Prostate gland (tissue), 2 donors: ENCODE measurements at regions of chr3 and their contacts with region 1.

Region 1: DNA sequence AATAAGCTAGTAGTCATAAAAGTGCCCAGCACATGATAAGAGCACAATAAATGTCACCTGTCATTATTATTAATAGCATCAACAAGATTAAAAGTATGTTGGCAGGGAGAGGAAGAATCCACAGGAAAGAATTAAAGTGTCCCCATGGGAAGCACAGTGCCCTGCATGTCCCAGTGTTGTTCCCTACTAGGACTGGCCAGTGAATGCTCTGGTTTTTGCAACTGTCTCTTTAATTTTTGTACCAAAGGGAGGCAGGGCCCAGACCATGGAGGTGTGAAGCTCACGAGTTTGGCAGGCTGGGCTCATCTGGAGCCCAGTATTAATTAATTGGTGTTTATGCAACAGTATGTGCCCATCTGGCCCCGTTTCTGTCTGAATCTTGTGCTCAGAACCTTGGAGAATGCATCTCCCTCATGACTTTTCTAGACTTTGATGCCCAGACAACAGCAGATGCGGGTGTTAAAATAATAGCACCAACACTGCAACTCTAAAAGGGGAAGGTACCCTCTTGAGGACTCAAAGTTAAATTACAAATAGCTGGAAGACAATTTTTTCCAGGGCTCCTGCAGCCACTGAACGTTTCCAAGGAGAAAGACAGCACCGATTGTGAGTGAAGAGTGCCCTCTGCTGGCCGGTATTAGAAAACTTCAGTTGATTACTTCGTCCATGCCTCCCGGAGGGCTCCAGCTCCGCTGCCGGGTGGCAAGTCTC is 71.9 kb upstream of the SPATA12 start:
- DNase-seq: peak; percentile 83
- H3K4me3 ChIP-seq: no peak overlapping the region
- H3K27ac ChIP-seq: peak overlapping the region in 1 of 2 donors; percentile 41
- H3K4me1 ChIP-seq: peaks cover 8% of the 10 kb centered on the region
- H3K27me3 ChIP-seq: no peaks in the 10 kb centered on the region
- CTCF ChIP-seq: peak; percentile 62 to 91 (median 86)
- POLR2A ChIP-seq: no peak

Region 2: GRCh38 chr3:56086355-56086754 is 902.3 kb before region 1 on chr3:
- intact Hi-C with region 1: no loop called
- DNase-seq: no peak
- H3K4me3 ChIP-seq: no peak overlapping the region
- H3K27ac ChIP-seq: no peak overlapping the region
- H3K4me1 ChIP-seq: no peaks in the 10 kb centered on the region
- H3K27me3 ChIP-seq: no peaks in the 10 kb centered on the region
- CTCF ChIP-seq: no peak
- POLR2A ChIP-seq: no peak

Region 3: DNA sequence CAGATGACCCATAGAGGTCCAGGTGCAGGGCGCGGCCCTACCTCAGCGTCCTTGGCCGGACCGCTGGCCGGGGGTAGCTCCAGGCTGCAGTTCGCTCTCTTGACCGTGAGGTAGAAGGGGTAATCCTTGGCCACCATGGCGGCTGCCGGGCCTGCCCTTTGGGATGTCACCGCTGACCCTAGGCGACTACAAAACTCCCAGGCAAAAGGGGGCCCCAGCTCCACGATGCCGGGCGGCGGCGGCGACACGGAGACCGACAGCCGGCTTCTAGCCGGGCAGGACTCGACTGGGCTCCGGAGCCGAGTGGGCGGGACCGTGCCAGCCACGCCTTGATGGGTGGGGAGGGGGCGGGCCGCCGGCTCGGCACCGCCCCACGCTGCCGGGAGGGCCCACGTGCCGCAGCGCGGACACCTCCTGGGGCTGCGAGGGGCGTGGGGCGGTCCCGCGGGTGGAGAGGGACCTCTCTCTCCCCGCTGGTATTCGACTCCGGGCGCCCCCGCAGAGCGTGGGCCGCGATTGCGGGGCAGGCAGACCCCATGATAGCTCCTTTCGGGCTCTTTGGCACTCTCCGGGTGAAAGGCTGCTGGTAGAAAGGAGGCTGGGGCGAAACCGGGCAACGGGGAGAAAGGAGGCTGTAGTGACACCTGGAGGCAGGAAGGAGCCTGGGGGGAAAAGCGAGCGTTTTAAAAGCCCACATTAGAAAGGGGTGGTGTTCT is 186.8 kb before region 1 on chr3 and contains the start of gene ARHGEF3:
- intact Hi-C with region 1: loop called (anchors 2 kb)
- DNase-seq: peak; percentile 82
- H3K4me3 ChIP-seq: peak within 1 kb of the TSS; percentile 59 to 69
- H3K27ac ChIP-seq: peak within 1 kb of the TSS; percentile 47 to 55
- H3K4me1 ChIP-seq: no peaks in the 10 kb centered on the region
- H3K27me3 ChIP-seq: no peaks in the 10 kb centered on the region
- CTCF ChIP-seq: peak in 2 of 4 experiments; percentile 30 to 33
- POLR2A ChIP-seq: peak; percentile 89
- total RNA-seq, gene ARHGEF3: 21.6 to 59.4 TPM

Region 4: GRCh38 chr3:56930706-56931105 is 57.9 kb before region 1 on chr3:
- intact Hi-C with region 1: loop called (anchors 5 kb)
- DNase-seq: no peak
- H3K4me3 ChIP-seq: no peak overlapping the region
- H3K27ac ChIP-seq: no peak overlapping the region
- H3K4me1 ChIP-seq: no peaks in the 10 kb centered on the region
- H3K27me3 ChIP-seq: no peaks in the 10 kb centered on the region
- CTCF ChIP-seq: no peak
- POLR2A ChIP-seq: no peak

Region 5: DNA sequence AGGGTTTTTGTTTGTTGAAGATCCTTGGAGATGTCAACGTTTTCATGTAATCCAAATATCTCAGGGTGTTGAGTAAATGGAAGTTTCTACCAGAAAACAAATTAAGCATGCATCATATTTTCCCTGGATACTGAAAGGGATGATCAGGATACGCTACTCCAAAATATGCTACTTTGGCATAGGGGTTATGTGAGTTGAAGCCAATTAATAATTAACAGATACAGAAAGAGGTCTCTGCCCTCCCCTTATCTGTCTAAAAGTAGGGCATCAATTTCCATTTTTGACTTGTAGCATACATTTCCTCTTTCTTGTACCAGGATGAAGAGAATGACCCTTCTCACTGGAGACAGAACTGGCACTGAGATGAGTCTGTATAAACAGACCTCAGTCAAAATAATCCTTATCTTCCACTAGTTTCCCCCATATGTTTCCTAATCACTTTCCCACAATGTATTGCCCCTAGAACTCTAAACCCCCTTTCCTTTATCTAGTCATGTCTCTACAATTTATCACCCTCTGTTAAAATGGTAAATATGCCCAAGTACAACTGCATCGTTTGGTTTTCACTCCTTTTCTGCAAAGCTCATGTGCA is 321.3 kb after region 1 on chr3:
- intact Hi-C with region 1: no loop called
- DNase-seq: no peak
- H3K4me3 ChIP-seq: no peak overlapping the region
- H3K27ac ChIP-seq: no peak overlapping the region
- H3K4me1 ChIP-seq: no peaks in the 10 kb centered on the region
- H3K27me3 ChIP-seq: no peaks in the 10 kb centered on the region
- CTCF ChIP-seq: no peak
- POLR2A ChIP-seq: no peak